PC-9 (cell line): ENCODE measurements at regions of chr2 and their contacts with region 1.

Region 1: GRCh38 chr2:74472086-74472944 is at the start of gene MRPL53:
- DNase-seq: peak; percentile 91 to 93
- H3K4me3 ChIP-seq: peak within 1 kb of the TSS; percentile 89
- H3K27ac ChIP-seq: peak within 1 kb of the TSS; percentile 74
- H3K4me1 ChIP-seq: peaks cover 9% of the 10 kb centered on the region
- H3K27me3 ChIP-seq: no peaks in the 10 kb centered on the region
- CTCF ChIP-seq: no peak
- total RNA-seq, gene MRPL53: 42.9 and 51.1 TPM in 2 replicates

Region 2: GRCh38 chr2:74206180-74206688 is 266.1 kb before region 1 on chr2:
- CTCF ChIA-PET with region 1: no interaction called
- POLR2A ChIA-PET with region 1: interaction called, 19 read pairs
- intact Hi-C with region 1: no loop called
- DNase-seq: peak in 1 of 2 experiments; percentile 54
- H3K4me3 ChIP-seq: no peak overlapping the region
- H3K27ac ChIP-seq: peak overlapping the region; percentile 66
- H3K4me1 ChIP-seq: peaks cover 45% of the 10 kb centered on the region
- H3K27me3 ChIP-seq: no peaks in the 10 kb centered on the region
- CTCF ChIP-seq: no peak

Region 3: DNA sequence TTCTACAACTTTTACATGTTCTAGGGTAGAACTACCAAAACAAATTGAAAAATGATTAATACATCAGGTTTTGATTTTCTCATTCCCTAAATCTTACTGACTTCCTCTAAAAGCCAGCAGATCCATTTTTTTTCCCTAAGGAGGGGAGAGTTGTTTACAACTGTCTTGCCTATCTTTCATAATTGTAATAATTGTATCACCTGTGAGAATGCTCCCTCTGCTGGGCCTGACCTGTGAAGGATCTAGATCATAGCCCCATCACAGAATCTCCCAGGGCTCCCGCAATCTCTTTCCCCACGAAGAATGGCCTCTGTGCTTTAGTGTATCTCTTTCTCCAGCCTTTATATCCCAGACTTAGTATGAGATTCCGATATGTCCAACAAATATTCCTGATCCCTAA is 72.3 kb after region 1 on chr2:
- CTCF ChIA-PET with region 1: interaction called, 16 read pairs
- POLR2A ChIA-PET with region 1: no interaction called
- intact Hi-C with region 1: no loop called
- DNase-seq: no peak
- H3K4me3 ChIP-seq: no peak overlapping the region
- H3K27ac ChIP-seq: no peak overlapping the region
- H3K4me1 ChIP-seq: 0 out of 2 replicates have a peak, but pooled peaks cover 1% of the 10 kb centered on the region
- H3K27me3 ChIP-seq: no peaks in the 10 kb centered on the region
- CTCF ChIP-seq: peak; percentile 43; the same call in 1 of the 2 replicates

Region 4: DNA sequence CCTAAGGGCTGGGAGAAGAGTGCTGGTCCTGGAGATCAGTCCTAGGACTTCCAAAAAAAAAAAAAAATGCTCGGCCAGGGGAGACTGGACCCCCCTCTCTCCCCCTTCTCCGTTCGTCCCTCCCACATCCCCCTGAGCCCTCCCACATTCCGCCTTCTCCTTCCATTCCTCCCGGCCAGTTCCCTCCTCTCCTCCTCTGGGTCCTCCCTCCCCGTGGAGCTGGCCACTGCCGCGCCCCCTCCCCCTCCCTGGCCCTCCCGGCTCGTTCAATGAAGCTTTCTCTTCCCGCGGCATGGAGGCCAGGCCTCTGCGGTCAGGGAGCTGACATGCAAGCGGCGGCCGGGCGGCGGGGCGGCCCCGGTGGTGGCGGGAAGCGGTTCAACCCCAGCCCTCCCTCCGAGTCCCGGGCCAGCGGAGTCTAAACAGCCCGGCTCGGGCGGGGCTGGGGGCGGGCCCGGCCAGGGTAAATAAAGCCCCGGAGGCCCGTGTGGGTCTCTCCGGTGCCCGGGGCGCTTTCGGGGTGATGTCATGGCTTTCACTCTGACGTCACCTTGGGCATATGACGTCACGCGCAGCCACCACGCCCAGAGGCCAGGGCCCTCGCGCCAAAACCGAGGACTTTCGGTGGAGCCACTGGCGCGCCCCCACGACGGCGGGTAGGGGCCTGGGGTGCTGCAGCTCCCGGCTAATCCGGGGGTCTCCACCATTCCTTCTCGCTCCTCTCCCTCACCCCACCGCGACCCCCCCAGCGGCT is 81.8 kb after region 1 on chr2 and contains the start of gene LOXL3:
- CTCF ChIA-PET with region 1: interaction called, 13 read pairs
- POLR2A ChIA-PET with region 1: no interaction called
- intact Hi-C with region 1: no loop called
- DNase-seq: peak; percentile 57 to 74
- H3K4me3 ChIP-seq: peak within 1 kb of the TSS; percentile 78
- H3K27ac ChIP-seq: no peak within 1 kb of the TSS
- H3K4me1 ChIP-seq: peaks cover 16% of the 10 kb centered on the region
- H3K27me3 ChIP-seq: no peaks in the 10 kb centered on the region
- CTCF ChIP-seq: no peak
- total RNA-seq, gene LOXL3: 3.1 and 5.0 TPM in 2 replicates